Dendritic cell treated with granulocyte-macrophage colony-stimulating factor and Interleukin-4, amounts not matched to agents 40 ng/mL and 50 ng/mL, for 4 days (primary cell): ENCODE measurements at regions of chr4 and their contacts with region 1.

Region 1: DNA sequence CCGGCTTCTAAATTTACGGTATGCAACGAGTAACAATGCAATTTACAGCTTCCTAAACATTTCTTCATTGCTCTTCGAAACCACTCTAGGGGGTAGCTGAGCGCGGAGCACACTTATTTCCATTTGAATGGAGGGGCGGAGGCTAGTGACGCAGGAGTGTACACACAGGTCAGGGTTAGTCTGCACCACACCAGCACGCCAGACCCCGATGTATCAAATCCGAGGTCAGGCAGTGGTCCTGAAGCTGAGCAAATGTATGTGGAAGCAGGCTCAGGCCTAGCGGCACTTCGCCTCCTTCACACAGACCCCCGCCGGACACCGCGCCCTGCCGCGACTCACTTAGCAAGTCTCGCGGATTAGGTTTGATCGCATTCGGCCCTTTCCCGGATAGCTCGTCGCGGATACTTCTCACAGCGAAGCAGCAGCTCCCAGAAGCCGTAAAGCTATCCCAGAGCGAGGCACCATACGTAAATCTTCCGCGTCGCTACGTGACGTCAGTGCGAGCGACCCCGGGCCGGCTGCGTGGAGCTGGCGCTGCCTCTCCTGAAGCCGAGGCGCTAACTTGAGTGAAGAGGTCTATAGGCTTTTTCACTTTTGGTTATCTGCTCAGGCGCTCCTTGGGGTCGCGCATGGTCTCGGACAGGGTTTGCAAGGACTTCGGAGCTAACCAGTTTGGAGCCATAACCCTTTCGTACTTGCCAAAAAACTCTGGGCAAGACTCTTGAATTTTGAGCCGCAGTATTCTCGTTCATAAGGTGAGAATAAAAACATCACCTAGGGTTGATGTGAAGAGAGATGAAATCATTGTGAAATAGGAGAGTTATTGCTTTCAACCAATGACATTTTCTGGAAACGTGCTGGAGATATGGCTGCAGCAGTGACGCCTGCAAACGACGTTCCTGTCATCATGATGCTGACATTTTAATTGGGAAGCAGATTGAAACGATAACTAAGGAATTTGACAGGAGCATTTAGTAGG is at the start of gene AASDH:
- H3K4me3 Mint-ChIP-seq: peak within 1 kb of the TSS; percentile 87
- H3K27ac Mint-ChIP-seq: peak within 1 kb of the TSS; percentile 99
- H3K4me1 Mint-ChIP-seq: peaks cover 14% of the 10 kb centered on the region
- H3K27me3 Mint-ChIP-seq: no peaks in the 10 kb centered on the region

Region 2: DNA sequence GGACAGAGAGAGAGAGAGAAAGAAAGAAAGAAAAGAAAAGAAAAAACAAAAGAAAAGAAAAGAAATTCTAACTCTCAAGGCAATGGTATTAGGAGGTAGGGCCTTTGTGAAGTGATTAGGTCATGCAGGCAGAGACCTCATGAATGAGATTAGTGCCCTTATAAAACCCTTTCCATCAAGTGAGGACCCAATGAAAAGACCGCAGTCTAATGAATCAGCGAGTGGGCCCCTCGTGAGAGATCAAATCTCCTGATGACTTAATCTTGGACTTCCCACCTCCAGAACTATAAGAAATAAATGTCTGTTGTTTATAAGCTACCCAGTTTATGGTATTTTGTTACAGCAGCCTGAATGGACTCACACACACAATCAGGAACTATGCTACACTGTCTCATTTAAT is 16.9 kb before region 1 on chr4:
- intact Hi-C with region 1: no loop called
- H3K4me3 Mint-ChIP-seq: no peak overlapping the region
- H3K27ac Mint-ChIP-seq: no peak overlapping the region
- H3K4me1 Mint-ChIP-seq: no peaks in the 10 kb centered on the region
- H3K27me3 Mint-ChIP-seq: no peaks in the 10 kb centered on the region

Region 3: GRCh38 chr4:56435306-56435926 is 48.1 kb after region 1 on chr4 and contains the start of gene PPAT:
- intact Hi-C with region 1: loop called (anchors 1 kb)
- H3K4me3 Mint-ChIP-seq: peak within 1 kb of the TSS; percentile 78
- H3K27ac Mint-ChIP-seq: peak within 1 kb of the TSS; percentile 89
- H3K4me1 Mint-ChIP-seq: peaks cover 35% of the 10 kb centered on the region
- H3K27me3 Mint-ChIP-seq: no peaks in the 10 kb centered on the region